ENCODE measurements at regions of chr11 and their contacts with region 1.

Region 1: GRCh38 chr11:14300661-14301304 is 58.2 kb downstream of the RRAS2 start:
- DNase-seq: peak; percentile 88
- H3K4me3 ChIP-seq: no peak overlapping the region
- H3K27ac ChIP-seq: no peak overlapping the region
- H3K4me1 ChIP-seq: peaks cover 10% of the 10 kb centered on the region
- H3K27me3 ChIP-seq: no peaks in the 10 kb centered on the region
- CTCF ChIP-seq: peak; percentile 78 to 86
- POLR2A ChIP-seq: peak; percentile 27

Region 2: GRCh38 chr11:13983081-13983751 is 317.6 kb before region 1 on chr11:
- CTCF ChIA-PET with region 1: no interaction called
- POLR2A ChIA-PET with region 1: no interaction called
- dilution Hi-C with region 1: no loop called
- intact Hi-C with region 1: no loop called
- DNase-seq: no peak
- H3K4me3 ChIP-seq: no peak overlapping the region
- H3K27ac ChIP-seq: no peak overlapping the region
- H3K4me1 ChIP-seq: no peaks in the 10 kb centered on the region
- H3K27me3 ChIP-seq: no peaks in the 10 kb centered on the region
- CTCF ChIP-seq: no peak
- POLR2A ChIP-seq: no peak

Region 3: GRCh38 chr11:14358729-14359439 is 58.1 kb after region 1 on chr11 and contains the start of gene RRAS2:
- CTCF ChIA-PET with region 1: interaction called, 17 read pairs
- POLR2A ChIA-PET with region 1: no interaction called
- dilution Hi-C with region 1: no loop called
- intact Hi-C with region 1: loop called (anchors 1 kb)
- DNase-seq: peak; percentile 77
- H3K4me3 ChIP-seq: peak within 1 kb of the TSS; percentile 57 to 84 (median 75)
- H3K27ac ChIP-seq: peak within 1 kb of the TSS; percentile 46
- H3K4me1 ChIP-seq: peaks cover 9% of the 10 kb centered on the region
- H3K27me3 ChIP-seq: no peaks in the 10 kb centered on the region
- CTCF ChIP-seq: no peak
- POLR2A ChIP-seq: peak; percentile 85
- total RNA-seq, gene RRAS2: 80.5 and 84.4 TPM in 2 replicates

Region 4: DNA sequence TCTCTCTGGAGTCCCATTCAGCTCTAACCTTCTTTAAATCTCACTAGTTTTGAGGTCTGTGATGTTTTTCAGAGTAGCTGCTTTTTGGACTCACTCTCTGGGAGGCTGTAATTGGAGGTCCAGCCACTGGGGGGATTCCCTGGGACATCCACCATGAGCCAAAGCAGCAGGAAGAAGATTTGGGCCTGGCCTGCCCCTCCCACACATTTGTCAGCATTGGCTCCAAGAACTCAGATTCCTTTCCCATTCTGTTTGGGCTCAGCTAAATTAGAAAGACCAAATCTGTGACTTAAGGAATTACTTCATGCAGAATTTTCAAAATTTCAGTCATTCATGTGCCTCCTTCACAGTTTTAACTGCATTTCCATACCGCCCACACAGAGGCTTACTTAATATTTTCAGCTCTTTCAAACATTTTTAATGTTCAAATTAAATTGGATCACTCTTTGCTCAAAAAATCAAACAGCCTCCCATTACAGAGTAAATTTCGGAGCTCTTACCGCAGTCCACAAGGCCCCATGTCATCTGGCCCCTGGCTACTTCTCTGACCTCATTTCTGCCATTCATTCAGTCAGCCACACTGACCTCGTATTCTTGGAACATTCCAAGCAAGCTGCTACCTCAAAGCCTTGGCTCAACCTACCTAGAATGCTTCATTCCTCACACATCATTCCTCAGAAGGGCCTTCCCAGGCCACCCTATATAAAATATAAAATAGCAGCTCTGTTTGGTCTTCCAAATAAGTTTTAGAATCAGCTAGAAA is 112.7 kb after region 1 on chr11:
- CTCF ChIA-PET with region 1: interaction called, 261 read pairs
- POLR2A ChIA-PET with region 1: no interaction called
- dilution Hi-C with region 1: no loop called
- intact Hi-C with region 1: no loop called
- DNase-seq: no peak
- H3K4me3 ChIP-seq: no peak overlapping the region
- H3K27ac ChIP-seq: no peak overlapping the region
- H3K4me1 ChIP-seq: peaks cover 3% of the 10 kb centered on the region
- H3K27me3 ChIP-seq: no peaks in the 10 kb centered on the region
- CTCF ChIP-seq: peak in 1 of 2 donors; percentile 9
- POLR2A ChIP-seq: no peak

Region 5: DNA sequence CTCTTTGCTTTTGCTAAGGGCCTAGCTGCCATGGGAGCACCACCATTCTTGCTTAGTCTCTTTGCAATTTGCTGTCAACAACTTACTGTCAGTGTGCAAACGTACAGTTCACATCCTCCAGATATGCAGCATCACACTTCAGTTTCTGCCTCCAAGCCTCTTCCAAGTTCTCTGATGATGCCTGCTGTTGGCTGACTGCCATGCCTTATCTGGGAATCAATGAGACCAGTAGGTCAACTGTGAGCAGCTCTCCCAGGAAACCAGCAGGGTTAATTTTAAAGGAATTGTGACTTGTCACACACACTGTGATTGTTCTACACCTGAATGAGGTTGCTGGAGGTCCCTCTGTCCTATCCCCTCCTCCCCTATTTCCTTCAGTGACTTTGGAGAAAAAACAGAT is 142.9 kb after region 1 on chr11:
- CTCF ChIA-PET with region 1: interaction called, 41 read pairs
- POLR2A ChIA-PET with region 1: interaction called, 3 read pairs
- dilution Hi-C with region 1: no loop called
- intact Hi-C with region 1: loop called (anchors 2 kb)
- DNase-seq: no peak
- H3K4me3 ChIP-seq: no peak overlapping the region
- H3K27ac ChIP-seq: no peak overlapping the region
- H3K4me1 ChIP-seq: peaks cover 29% of the 10 kb centered on the region
- H3K27me3 ChIP-seq: no peaks in the 10 kb centered on the region
- CTCF ChIP-seq: no peak
- POLR2A ChIP-seq: no peak

Region 6: DNA sequence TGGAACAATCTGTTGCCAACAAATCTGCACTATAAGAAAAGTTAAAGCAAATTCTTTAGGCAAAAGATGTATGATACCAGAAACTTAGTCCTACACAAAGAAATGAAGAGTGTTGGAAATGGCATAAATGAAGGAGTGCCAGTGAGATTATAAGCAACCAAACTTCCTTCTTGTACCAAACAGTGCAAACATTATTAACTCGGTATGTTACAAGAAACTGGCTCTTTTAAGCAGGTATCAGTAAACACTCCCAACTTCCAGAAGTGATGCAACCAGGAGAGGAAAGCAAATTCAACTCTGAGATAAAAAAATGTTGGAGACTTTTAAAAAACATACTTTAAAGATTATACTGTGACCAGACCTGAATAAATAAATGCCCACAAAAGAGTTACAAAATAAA is 170.3 kb after region 1 on chr11:
- CTCF ChIA-PET with region 1: interaction called, 23 read pairs
- POLR2A ChIA-PET with region 1: interaction called, 3 read pairs
- dilution Hi-C with region 1: loop called (anchors 25 kb)
- intact Hi-C with region 1: no loop called
- DNase-seq: no peak
- H3K4me3 ChIP-seq: no peak overlapping the region
- H3K27ac ChIP-seq: no peak overlapping the region
- H3K4me1 ChIP-seq: peaks cover 9% of the 10 kb centered on the region
- H3K27me3 ChIP-seq: no peaks in the 10 kb centered on the region
- CTCF ChIP-seq: no peak
- POLR2A ChIP-seq: no peak

Region 7: DNA sequence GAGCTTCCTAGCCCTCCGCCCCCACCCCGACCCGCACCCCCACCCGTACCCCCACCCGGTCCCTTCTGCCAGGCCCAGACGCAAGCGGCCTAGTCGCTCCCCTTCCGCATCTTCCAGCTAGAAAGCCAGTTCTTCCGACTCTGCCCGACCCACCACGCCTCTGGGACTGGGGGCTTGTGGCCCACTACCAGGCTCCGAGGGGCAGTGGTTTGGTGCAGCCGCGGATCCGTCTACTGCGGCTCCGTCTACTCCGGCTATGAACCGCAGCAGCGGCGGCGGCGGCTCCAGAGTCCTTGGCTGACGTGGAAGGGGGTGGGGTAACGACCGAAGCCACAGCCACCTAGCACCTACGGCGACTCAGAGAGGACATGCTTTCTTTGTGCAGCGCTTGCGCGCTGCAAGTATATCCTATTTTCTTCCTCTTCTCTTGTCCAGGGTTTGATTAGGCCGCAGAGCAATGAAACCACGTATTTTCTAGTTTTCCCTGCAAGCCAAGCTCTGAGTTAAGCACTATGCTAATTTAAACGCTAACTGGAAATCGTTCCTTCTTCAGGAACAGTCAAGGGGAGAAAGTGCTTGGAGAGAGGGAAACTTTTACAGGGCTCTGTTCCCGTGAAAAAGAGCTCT is 198.9 kb after region 1 on chr11 and contains the start of gene COPB1:
- CTCF ChIA-PET with region 1: interaction called, 13 read pairs
- POLR2A ChIA-PET with region 1: no interaction called
- dilution Hi-C with region 1: no loop called
- intact Hi-C with region 1: no loop called
- DNase-seq: peak; percentile 94
- H3K4me3 ChIP-seq: peak within 1 kb of the TSS; percentile 62 to 95 (median 95)
- H3K27ac ChIP-seq: peak within 1 kb of the TSS; percentile 82
- H3K4me1 ChIP-seq: peaks cover 20% of the 10 kb centered on the region
- H3K27me3 ChIP-seq: no peaks in the 10 kb centered on the region
- CTCF ChIP-seq: no peak
- POLR2A ChIP-seq: peak; percentile 97
- total RNA-seq, gene COPB1: 145 and 146 TPM in 2 replicates

Measured in endothelial cell of umbilical vein (primary cell).